HAP-1 (cell line): ENCODE measurements at regions of chr11 and their contacts with region 1.

Region 1: GRCh38 chr11:26649884-26650283 is 72.0 kb downstream of the SLC5A12 start:
- DNase-seq: peak; percentile 42 to 75
- H3K4me3 ChIP-seq: no peak overlapping the region
- H3K4me1 ChIP-seq: no peaks in the 10 kb centered on the region
- H3K27me3 ChIP-seq: peaks cover 19% of the 10 kb centered on the region

Region 2: GRCh38 chr11:26319906-26320305 is 330.0 kb before region 1 on chr11:
- in situ Hi-C with region 1: loop called (anchors 25 kb)
- DNase-seq: no peak
- H3K4me3 ChIP-seq: no peak overlapping the region
- H3K4me1 ChIP-seq: no peaks in the 10 kb centered on the region
- H3K27me3 ChIP-seq: 0 out of 2 replicates have a peak, but pooled peaks cover 2% of the 10 kb centered on the region